Activated CD8-positive, alpha-beta T cell treated with anti-CD3 and anti-CD28 coated beads for 36 hours (primary cell): ENCODE measurements at regions of chr17 and their contacts with region 1.

Region 1: GRCh38 chr17:34556384-34556783 is 23.0 kb upstream of the TMEM132E start:
- DNase-seq: peak; percentile 12
- ATAC-seq: no peak
- H3K4me3 Mint-ChIP-seq: no peak overlapping the region
- H3K27ac Mint-ChIP-seq: no peak overlapping the region
- H3K4me1 Mint-ChIP-seq: no peaks in the 10 kb centered on the region
- H3K27me3 Mint-ChIP-seq: peaks cover 5% of the 10 kb centered on the region
- CTCF ChIP-seq: no peak

Region 2: GRCh38 chr17:34499576-34499975 is 56.8 kb before region 1 on chr17:
- CTCF ChIA-PET with region 1: no interaction called
- POLR2A ChIA-PET with region 1: no interaction called
- intact Hi-C with region 1: no loop called
- DNase-seq: peak; percentile 35
- ATAC-seq: no peak
- H3K4me3 Mint-ChIP-seq: no peak overlapping the region
- H3K27ac Mint-ChIP-seq: no peak overlapping the region
- H3K4me1 Mint-ChIP-seq: peaks cover 10% of the 10 kb centered on the region
- H3K27me3 Mint-ChIP-seq: peaks cover 23% of the 10 kb centered on the region
- CTCF ChIP-seq: no peak

Region 3: GRCh38 chr17:34519282-34519681 is 37.1 kb before region 1 on chr17:
- CTCF ChIA-PET with region 1: no interaction called
- POLR2A ChIA-PET with region 1: no interaction called
- intact Hi-C with region 1: no loop called
- DNase-seq: peak; percentile 52
- ATAC-seq: peak; percentile 74
- H3K4me3 Mint-ChIP-seq: no peak overlapping the region
- H3K27ac Mint-ChIP-seq: no peak overlapping the region
- H3K4me1 Mint-ChIP-seq: no peaks in the 10 kb centered on the region
- H3K27me3 Mint-ChIP-seq: peaks cover 5% of the 10 kb centered on the region
- CTCF ChIP-seq: peak; percentile 70

Region 4: DNA sequence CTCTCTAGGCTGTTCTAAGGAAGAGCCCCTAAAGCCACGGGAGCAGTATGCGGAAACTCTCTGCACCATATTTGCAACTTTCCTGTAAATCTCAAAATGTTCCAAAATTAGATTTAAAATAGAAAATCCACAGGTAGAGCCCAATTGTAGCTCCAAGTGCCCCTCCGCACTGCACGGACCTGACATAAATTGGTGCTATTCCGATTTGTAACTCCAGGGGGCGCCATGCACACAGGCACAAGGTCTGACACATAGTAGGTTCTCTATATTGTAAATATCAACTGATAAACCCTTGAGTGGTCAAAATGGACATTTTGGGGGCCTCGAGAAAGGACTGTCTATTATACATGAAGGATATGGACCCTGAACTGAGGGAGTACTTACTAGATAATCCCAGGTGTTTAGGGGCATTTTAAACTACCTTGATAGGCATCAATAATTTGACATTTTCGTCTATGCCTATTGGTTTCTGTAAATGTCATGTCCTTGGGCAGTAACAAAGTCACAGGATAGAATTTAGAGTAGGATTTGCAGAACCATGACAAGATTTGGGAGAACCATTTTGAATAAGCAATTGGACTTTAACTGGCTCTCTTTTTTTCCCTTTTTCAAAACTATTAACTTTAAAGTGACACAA is 13.6 kb before region 1 on chr17:
- CTCF ChIA-PET with region 1: interaction called, 33 read pairs
- POLR2A ChIA-PET with region 1: interaction called, 6 read pairs
- intact Hi-C with region 1: no loop called
- DNase-seq: peak; percentile 73
- ATAC-seq: peak; percentile 66
- H3K4me3 Mint-ChIP-seq: no peak overlapping the region
- H3K27ac Mint-ChIP-seq: no peak overlapping the region
- H3K4me1 Mint-ChIP-seq: no peaks in the 10 kb centered on the region
- H3K27me3 Mint-ChIP-seq: peaks cover 22% of the 10 kb centered on the region
- CTCF ChIP-seq: peak; percentile 99